Activated CD8-positive, alpha-beta T cell treated with anti-CD3 and anti-CD28 coated beads for 36 hours (primary cell): ENCODE measurements at regions of chr20 and their contacts with region 1.

Region 1: DNA sequence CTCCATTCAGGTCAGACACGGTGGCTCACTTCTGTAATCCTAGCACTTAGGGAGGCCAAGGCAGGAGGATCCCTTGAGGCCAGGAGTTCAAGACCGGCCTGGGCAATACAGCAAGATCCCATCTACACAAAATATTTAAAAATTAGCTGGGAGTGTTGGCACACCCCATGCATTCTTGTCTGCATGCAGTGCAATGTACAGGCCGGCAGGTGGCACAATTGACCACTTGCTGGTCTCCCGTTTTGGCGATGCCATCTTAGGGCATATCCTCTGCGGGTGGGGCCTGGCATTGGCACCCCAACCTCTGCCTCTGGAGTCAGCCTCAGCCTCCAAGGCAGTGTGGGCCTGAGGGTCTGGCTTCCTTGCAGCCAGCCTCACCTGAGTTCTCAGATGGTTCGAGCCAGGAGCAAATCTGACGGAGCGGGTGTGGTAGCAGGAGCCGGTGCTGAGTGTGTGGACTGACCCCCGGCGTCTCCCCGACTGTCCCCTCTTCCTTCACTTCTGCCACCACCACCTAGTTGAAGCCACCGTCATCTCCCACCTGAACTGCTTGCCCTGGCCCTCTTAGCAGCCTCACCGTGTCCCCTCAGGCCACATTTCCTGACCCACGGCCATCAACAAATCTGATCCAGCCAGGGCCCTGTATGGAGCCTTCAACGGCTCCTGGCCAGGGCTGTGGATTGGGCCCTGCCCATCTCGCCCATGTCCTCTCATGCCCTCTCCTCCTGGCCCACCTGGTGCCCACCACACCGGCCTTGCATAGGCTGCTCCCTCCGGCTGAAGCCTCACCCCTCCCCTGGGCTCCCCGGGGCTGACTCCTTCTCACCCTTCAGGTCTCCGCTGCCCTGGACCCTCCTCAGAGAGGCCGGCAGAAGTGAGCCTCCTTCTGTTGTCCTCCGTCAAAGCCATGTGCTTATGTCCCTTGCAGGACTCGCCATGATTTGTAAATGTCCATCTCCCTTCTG is 44.0 kb downstream of the EFCAB8 start:
- DNase-seq: peak; percentile 78
- ATAC-seq: peak; percentile 94
- H3K4me3 Mint-ChIP-seq: no peak overlapping the region
- H3K27ac Mint-ChIP-seq: no peak overlapping the region
- H3K4me1 Mint-ChIP-seq: peaks cover 19% of the 10 kb centered on the region
- H3K27me3 Mint-ChIP-seq: no peaks in the 10 kb centered on the region
- CTCF ChIP-seq: peak; percentile 94

Region 2: DNA sequence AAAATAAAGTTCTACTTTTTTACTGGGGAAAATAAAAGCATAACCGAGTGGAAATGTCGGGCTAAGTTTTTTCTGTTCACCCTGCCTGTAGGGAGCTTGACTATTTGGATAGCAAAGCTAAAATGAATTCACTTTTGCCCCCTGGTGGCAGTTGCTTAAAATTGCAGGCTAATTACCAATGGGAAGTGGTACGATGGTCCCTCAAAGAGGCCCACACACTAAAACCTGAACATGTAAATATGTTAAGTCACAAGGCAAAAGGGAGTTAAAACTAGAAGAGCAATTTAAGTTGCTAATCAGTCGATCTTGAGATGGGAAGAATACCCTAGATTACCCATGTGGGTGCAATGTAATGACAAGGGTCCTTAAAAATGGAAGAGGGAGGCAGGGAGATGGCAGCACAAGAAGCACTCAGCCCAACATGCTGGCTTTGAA is 102.4 kb after region 1 on chr20:
- CTCF ChIA-PET with region 1: interaction called, 34 read pairs
- POLR2A ChIA-PET with region 1: interaction called, 3 read pairs
- intact Hi-C with region 1: loop called (anchors 2 kb)
- DNase-seq: peak; percentile 44
- ATAC-seq: peak; percentile 77
- H3K4me3 Mint-ChIP-seq: no peak overlapping the region
- H3K27ac Mint-ChIP-seq: no peak overlapping the region
- H3K4me1 Mint-ChIP-seq: peaks cover 9% of the 10 kb centered on the region
- H3K27me3 Mint-ChIP-seq: no peaks in the 10 kb centered on the region
- CTCF ChIP-seq: peak; percentile 83

Region 3: DNA sequence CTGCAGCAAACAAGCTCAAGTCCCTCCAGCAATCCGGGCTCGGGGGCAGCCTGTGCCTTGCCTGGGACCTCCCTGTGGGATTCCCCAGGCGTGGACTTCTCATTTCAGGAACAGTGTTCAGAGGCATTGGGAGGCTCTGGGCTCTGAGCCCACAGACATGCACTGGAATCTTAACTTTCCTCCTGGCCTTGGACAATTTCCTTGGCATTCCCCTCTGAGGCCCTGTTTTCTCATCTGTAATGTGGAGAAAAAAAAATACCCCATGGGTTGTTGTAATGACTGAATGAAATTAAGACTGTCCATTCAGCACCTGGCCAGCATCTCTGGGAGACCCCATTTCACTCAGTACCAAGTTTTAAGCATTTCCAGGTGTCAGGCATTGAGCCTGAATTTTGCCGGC is 194.3 kb after region 1 on chr20:
- CTCF ChIA-PET with region 1: interaction called, 31 read pairs
- POLR2A ChIA-PET with region 1: no interaction called
- intact Hi-C with region 1: loop called (anchors 5 kb)
- DNase-seq: no peak
- ATAC-seq: no peak
- H3K4me3 Mint-ChIP-seq: no peak overlapping the region
- H3K27ac Mint-ChIP-seq: no peak overlapping the region
- H3K4me1 Mint-ChIP-seq: peaks cover 2% of the 10 kb centered on the region
- H3K27me3 Mint-ChIP-seq: no peaks in the 10 kb centered on the region
- CTCF ChIP-seq: no peak

Region 4: GRCh38 chr20:33211817-33212424 is 309.2 kb after region 1 on chr20:
- CTCF ChIA-PET with region 1: no interaction called
- POLR2A ChIA-PET with region 1: no interaction called
- intact Hi-C with region 1: loop called (anchors 5 kb)
- DNase-seq: peak; percentile 57
- ATAC-seq: peak; percentile 58
- H3K4me3 Mint-ChIP-seq: no peak overlapping the region
- H3K27ac Mint-ChIP-seq: no peak overlapping the region
- H3K4me1 Mint-ChIP-seq: no peaks in the 10 kb centered on the region
- H3K27me3 Mint-ChIP-seq: peaks cover 37% of the 10 kb centered on the region
- CTCF ChIP-seq: peak; percentile 35

Region 5: GRCh38 chr20:33299111-33299603 is 396.4 kb after region 1 on chr20:
- CTCF ChIA-PET with region 1: interaction called, 3 read pairs
- POLR2A ChIA-PET with region 1: no interaction called
- intact Hi-C with region 1: loop called (anchors 10 kb)
- DNase-seq: peak; percentile 81
- ATAC-seq: peak; percentile 92
- H3K4me3 Mint-ChIP-seq: no peak overlapping the region
- H3K27ac Mint-ChIP-seq: no peak overlapping the region
- H3K4me1 Mint-ChIP-seq: no peaks in the 10 kb centered on the region
- H3K27me3 Mint-ChIP-seq: peaks cover 3% of the 10 kb centered on the region
- CTCF ChIP-seq: peak; percentile 90